AG04449 (cell line): ENCODE measurements at regions of chr17 and their contacts with region 1.

Region 1: GRCh38 chr17:48215583-48216139 is 108.1 kb downstream of the SNX11 start:
- DNase-seq: no peak
- H3K4me3 ChIP-seq: no peak overlapping the region
- CTCF ChIP-seq: peak; percentile 57

Region 2: DNA sequence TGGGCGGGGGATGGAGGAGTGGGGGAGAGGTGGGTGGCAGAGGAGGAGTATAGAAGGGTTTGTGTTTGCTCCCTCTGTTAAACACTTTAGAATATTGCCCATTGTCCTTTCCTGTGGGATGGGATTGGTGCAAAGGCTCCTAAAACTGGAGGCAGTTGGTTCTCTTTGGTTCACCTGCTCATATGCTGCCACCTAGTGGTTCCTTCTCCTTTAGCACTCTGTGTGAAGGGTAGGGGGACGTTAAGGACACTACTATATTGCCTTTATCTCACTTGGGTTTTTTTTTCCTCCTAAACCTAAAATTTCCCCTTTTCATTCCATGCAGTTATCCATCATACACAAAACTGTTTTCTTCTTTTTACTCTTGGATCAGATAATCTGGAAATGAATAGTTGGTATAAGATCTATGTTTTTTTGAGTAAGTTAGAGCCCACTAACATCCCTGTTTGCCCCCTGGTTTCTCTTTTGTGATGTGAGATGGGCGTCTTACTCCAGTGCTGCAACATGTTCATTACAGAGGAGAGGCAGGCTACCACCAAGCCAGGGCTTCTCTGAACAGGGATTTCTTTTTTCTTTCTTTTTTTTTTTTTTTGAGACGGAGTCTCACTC is 84.3 kb before region 1 on chr17:
- CTCF ChIA-PET with region 1: no interaction called
- POLR2A ChIA-PET with region 1: no interaction called
- DNase-seq: no peak
- H3K4me3 ChIP-seq: no peak overlapping the region
- CTCF ChIP-seq: peak; percentile 78

Region 3: GRCh38 chr17:48234922-48235321 is 19.3 kb after region 1 on chr17:
- CTCF ChIA-PET with region 1: interaction called, 16 read pairs
- POLR2A ChIA-PET with region 1: no interaction called
- DNase-seq: no peak
- H3K4me3 ChIP-seq: no peak overlapping the region
- CTCF ChIP-seq: no peak

Region 4: GRCh38 chr17:48618256-48618897 is 402.7 kb after region 1 on chr17:
- CTCF ChIA-PET with region 1: interaction called, 34 read pairs
- POLR2A ChIA-PET with region 1: no interaction called
- DNase-seq: no peak
- H3K4me3 ChIP-seq: peak overlapping the region; percentile 29
- CTCF ChIP-seq: peak; percentile 88